ENCODE measurements at regions of chr5 and their contacts with region 1.

Region 1: GRCh38 chr5:177209610-177210009 is 76.0 kb downstream of the NSD1 start:
- DNase-seq: no peak
- ATAC-seq: no peak
- H3K4me3 ChIP-seq: no peak overlapping the region
- H3K27ac ChIP-seq: no peak overlapping the region
- H3K4me1 ChIP-seq: peaks cover 0 to 4% (median 0%) of the 10 kb centered on the region in 12 donors
- H3K27me3 ChIP-seq: no peaks in the 10 kb centered on the region
- CTCF ChIP-seq: no peak
- POLR2A ChIP-seq: no peak

Region 2: DNA sequence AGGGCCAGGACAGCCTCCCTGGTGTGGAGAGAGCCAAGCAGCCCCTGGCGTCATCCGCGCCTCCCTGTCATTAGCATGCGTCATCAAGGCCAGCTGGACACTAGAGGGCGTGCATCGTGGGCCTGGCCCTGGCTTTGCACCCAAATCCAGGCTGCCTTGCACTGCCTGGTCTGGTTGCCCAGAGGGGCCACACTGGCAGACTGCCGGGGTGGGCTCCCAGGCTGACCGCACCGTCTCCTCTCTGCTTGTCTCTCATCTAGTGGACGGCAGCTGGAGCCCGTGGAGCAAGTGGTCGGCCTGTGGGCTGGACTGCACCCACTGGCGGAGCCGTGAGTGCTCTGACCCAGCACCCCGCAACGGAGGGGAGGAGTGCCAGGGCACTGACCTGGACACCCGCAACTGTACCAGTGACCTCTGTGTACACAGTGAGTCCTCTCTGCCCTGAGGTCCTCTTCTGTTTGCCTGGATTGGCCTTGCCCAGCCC is 339.5 kb before region 1 on chr5:
- intact Hi-C with region 1: no loop called
- DNase-seq: no peak
- ATAC-seq: peak; percentile 10 to 67 (median 59)
- H3K4me3 ChIP-seq: no peak overlapping the region
- H3K27ac ChIP-seq: no peak overlapping the region
- H3K4me1 ChIP-seq: no peaks in the 10 kb centered on the region
- H3K27me3 ChIP-seq: peaks cover 7 to 64% (median 24%) of the 10 kb centered on the region in 9 donors
- CTCF ChIP-seq: peak in 11 of 12 donors; percentile 9 to 45 (median 31)
- POLR2A ChIP-seq: no peak

Region 3: GRCh38 chr5:176995896-176996754 is 213.5 kb before region 1 on chr5:
- intact Hi-C with region 1: no loop called
- DNase-seq: no peak
- ATAC-seq: peak in 1 of 4 donors; percentile 7
- H3K4me3 ChIP-seq: no peak overlapping the region
- H3K27ac ChIP-seq: peak overlapping the region in 4 of 12 donors; percentile 3 to 81 (median 60)
- H3K4me1 ChIP-seq: peaks cover 0 to 44% (median 10%) of the 10 kb centered on the region in 12 donors
- H3K27me3 ChIP-seq: no peaks in the 10 kb centered on the region
- CTCF ChIP-seq: no peak
- POLR2A ChIP-seq: no peak

Region 4: GRCh38 chr5:177241768-177242167 is 32.2 kb after region 1 on chr5:
- intact Hi-C with region 1: no loop called
- DNase-seq: no peak
- ATAC-seq: no peak
- H3K4me3 ChIP-seq: no peak overlapping the region
- H3K27ac ChIP-seq: no peak overlapping the region
- H3K4me1 ChIP-seq: peaks cover 0 to 4% (median 0%) of the 10 kb centered on the region in 12 donors
- H3K27me3 ChIP-seq: no peaks in the 10 kb centered on the region
- CTCF ChIP-seq: no peak
- POLR2A ChIP-seq: no peak

Region 5: GRCh38 chr5:177256296-177256695 is 46.7 kb after region 1 on chr5:
- intact Hi-C with region 1: loop called in 1 of 10 experiments (anchors 10 kb)
- DNase-seq: no peak
- ATAC-seq: no peak
- H3K4me3 ChIP-seq: no peak overlapping the region
- H3K27ac ChIP-seq: no peak overlapping the region
- H3K4me1 ChIP-seq: peaks cover 0 to 4% (median 0%) of the 10 kb centered on the region in 12 donors
- H3K27me3 ChIP-seq: no peaks in the 10 kb centered on the region
- CTCF ChIP-seq: no peak
- POLR2A ChIP-seq: no peak

Region 6: DNA sequence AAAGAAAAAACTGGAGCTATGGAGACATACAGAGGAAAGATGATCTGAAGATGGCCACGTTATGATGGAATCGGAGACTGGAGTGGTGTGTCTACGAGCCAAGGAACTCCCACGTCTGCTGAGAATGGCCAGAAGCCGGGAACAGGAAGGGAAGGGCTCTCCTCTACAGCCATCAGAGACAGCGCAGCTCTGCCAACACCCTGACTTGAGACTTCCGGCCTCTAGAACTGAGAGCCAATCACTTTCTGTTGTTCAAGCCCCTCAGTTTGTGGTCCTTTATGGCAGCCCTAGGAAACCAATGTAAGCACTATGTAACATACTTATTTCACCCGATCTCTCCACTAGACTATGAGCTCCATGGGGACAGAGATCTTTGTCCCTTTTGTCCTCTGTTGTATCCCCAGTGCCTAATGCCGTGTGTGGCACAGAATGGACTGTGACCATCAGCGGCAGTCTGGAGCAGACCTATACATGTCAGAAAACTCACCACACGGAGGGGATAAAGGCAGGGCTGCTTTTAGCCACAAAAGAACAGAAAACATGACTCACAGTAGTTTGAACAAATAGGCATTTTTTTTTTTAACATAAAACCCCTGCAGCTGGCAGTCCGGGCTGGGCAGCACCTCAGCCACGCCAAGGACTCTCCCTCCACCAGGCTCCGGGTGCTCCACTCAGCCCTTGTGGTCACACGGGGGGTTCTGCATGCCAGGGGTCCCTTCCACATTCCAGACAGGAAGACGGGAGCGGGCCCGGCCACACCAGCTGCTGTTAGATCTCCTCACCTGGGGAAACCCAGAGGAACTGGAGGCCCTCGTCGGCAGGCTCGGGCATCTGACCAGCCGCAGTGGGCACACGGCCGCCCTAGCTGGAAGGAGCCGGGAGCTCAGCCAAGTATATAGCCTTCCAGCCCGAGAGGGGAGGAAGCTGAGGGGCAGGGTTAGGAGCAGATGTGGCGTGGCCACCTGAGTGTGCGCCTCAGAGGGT is 118.2 kb after region 1 on chr5:
- intact Hi-C with region 1: no loop called
- DNase-seq: peak in 3 of 5 donors; percentile 62 to 77 (median 72)
- ATAC-seq: peak; percentile 52 to 95 (median 89)
- H3K4me3 ChIP-seq: no peak overlapping the region
- H3K27ac ChIP-seq: peak overlapping the region in 10 of 12 donors; percentile 12 to 75 (median 62)
- H3K4me1 ChIP-seq: peaks cover 0 to 19% (median 5%) of the 10 kb centered on the region in 12 donors
- H3K27me3 ChIP-seq: no peaks in the 10 kb centered on the region
- CTCF ChIP-seq: no peak
- POLR2A ChIP-seq: no peak

Measured in heart left ventricle (tissue), 16 donors.